K562 (cell line): ENCODE measurements at regions of chr19 and their contacts with region 1.

Region 1: DNA sequence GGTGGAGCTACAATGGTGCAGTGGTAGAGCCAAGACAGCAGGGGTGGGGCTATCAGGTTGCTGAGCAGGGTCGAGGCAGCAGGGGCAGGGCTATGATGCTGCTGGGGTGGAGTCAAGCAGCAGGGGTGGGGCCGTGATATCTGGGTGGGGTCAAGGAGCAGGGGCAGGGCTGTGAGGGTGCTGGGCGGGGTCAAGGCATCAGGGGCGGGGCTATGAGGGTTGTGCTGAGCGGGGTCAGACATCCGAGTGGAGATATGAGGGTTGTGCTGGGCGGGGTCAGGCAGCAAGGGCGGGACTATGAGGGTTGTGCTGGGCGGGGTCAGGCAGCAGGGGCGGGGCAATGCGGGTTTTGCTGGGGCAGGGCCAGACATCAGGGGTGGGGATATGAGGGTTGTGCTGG is 14.7 kb downstream of the HCN2 start:
- DNase-seq: peak; percentile 76 to 86 (median 82)
- ATAC-seq: peak; percentile 96
- H3K4me3 ChIP-seq: no peak overlapping the region
- H3K27ac ChIP-seq: no peak overlapping the region
- H3K4me1 ChIP-seq: peaks cover 0 to 51% of the 10 kb centered on the region in 2 experiments; a peak in 2 of 5 replicates
- H3K27me3 ChIP-seq: no peaks in the 10 kb centered on the region
- CTCF ChIP-seq: no peak
- EP300 ChIP-seq: no peak
- POLR2A ChIP-seq: no peak
- RAD21 ChIP-seq: no peak

Region 2: DNA sequence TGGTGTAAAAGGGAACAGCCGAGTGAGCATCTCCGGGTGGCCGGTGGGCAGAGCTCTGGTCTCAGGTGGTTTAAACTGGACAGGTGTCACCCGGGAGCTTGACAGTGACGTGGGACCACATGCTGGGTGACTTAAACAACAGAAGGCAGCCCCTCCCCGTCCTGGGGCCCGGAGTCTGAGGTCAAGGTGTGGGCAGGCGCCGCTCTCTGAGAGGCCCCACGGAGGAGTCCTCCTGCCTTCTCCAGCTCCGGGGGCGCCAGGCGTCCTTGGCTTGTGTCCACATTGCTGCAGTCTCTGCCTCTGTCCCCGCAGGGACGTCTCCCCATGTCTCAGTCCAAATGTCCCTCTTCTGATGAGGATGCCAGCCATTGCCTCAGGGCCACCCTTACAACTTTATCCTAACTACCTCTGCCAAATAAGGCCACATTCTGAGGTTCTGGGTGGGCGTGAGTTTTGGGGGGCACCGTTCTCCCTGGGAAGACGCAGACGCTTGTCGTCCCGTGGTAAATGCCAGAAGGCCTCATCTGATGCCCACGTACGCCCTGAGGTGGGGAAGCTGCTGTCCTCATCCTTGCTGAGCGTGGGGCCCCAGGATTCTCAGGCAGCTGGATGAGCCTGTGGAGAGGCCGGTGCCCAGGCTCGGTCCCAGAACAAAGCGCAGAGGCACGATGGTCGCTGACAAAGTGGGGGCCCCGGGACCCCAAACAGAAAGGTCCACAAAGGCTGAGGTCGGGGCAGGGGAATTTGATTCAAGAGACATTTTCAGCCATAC is 47.6 kb before region 1 on chr19:
- CTCF ChIA-PET with region 1: no interaction called
- POLR2A ChIA-PET with region 1: no interaction called
- in situ Hi-C with region 1: no loop called
- intact Hi-C with region 1: loop called (anchors 2 kb)
- DNase-seq: peak; percentile 48 to 81 (median 61)
- ATAC-seq: peak; percentile 55
- H3K4me3 ChIP-seq: peak overlapping the region; percentile 2; the same call in 1 of the 2 replicates
- H3K27ac ChIP-seq: peak overlapping the region; percentile 83
- H3K4me1 ChIP-seq: peaks cover 22 to 62% of the 10 kb centered on the region in 2 experiments; a peak in 4 of 5 replicates
- H3K27me3 ChIP-seq: no peaks in the 10 kb centered on the region
- CTCF ChIP-seq: no peak
- EP300 ChIP-seq: no peak
- POLR2A ChIP-seq: no peak
- RAD21 ChIP-seq: no peak